ENCODE measurements at regions of chr5 and their contacts with region 1.

Region 1: GRCh38 chr5:1204693-1205242 is 3.4 kb downstream of the SLC6A19 start:
- DNase-seq: peak; percentile 71
- ATAC-seq: peak; percentile 74
- H3K4me3 ChIP-seq: peak overlapping the region in 2 of 3 experiments; percentile 24 to 58; a peak in 3 of 6 replicates
- H3K27ac ChIP-seq: no peak overlapping the region
- H3K4me1 ChIP-seq: peaks cover 31% of the 10 kb centered on the region
- H3K27me3 ChIP-seq: peaks cover 17 to 82% of the 10 kb centered on the region in 2 experiments
- CTCF ChIP-seq: peak; percentile 80
- EP300 ChIP-seq: no peak
- POLR2A ChIP-seq: no peak
- RAD21 ChIP-seq: peak; percentile 73; the same call in 1 of the 2 replicates

Region 2: DNA sequence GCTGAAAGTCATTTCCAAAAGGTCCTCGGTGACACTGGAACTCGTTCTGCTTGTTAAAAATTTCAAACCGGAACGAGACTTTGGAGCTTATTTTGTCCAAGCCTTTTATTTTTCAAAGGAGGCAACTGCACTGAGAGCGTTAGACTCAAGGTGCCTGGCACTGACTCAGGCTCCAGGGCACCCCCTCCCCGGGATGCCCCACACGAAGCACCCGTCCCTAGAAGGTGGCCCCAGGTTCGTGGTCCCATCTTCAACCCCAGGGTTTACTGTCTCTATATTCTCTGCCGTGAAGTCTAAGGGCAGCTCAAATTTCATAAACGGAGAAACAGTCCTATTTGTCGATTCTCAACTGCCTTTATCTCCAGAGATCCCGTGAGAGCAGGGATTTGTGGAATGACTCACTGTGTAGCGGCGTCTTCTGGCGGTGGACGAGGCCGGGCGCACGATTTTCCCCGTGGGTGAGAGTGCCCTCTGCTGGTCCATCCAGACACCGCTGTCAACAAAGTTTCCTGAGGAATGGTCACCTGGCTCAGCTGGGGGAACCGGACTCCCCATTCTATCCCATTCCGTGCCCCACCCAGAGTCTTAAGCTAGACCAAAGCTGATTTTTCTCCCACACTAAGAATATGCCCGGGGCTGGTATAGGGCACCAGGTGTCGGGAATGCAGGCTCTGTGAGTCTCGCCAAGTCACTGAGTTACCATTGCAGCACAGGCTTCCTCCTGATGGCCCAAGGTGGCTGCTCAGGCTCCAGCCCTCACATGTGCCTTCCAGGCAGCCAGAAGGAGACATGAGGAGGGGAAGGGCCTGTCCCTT is 30.4 kb before region 1 on chr5:
- CTCF ChIA-PET with region 1: interaction called, 24 read pairs
- POLR2A ChIA-PET with region 1: interaction called, 7 read pairs
- in situ Hi-C with region 1: no loop called
- intact Hi-C with region 1: loop called (anchors 1 kb)
- DNase-seq: peak; percentile 88
- ATAC-seq: peak; percentile 75
- H3K4me3 ChIP-seq: peak overlapping the region in 1 of 3 experiments; percentile 13; a peak in 1 of 6 replicates
- H3K27ac ChIP-seq: no peak overlapping the region
- H3K4me1 ChIP-seq: peaks cover 43% of the 10 kb centered on the region
- H3K27me3 ChIP-seq: peaks cover 0 to 15% of the 10 kb centered on the region in 2 experiments; a peak in 3 of 5 replicates
- CTCF ChIP-seq: peak; percentile 90
- EP300 ChIP-seq: no peak
- POLR2A ChIP-seq: no peak
- RAD21 ChIP-seq: peak; percentile 88

Region 3: GRCh38 chr5:1182633-1183423 is 21.9 kb before region 1 on chr5:
- CTCF ChIA-PET with region 1: no interaction called
- POLR2A ChIA-PET with region 1: interaction called, 13 read pairs
- in situ Hi-C with region 1: no loop called
- intact Hi-C with region 1: loop called (anchors 1 kb)
- DNase-seq: peak; percentile 89
- ATAC-seq: peak; percentile 69
- H3K4me3 ChIP-seq: peak overlapping the region; percentile 68 to 79 (median 74); a peak in 5 of 6 replicates
- H3K27ac ChIP-seq: peak overlapping the region; percentile 99
- H3K4me1 ChIP-seq: peaks cover 94% of the 10 kb centered on the region
- H3K27me3 ChIP-seq: no peaks in the 10 kb centered on the region; a peak in 1 of 5 replicates
- CTCF ChIP-seq: no peak
- EP300 ChIP-seq: peak in 1 of 2 experiments; percentile 54; a peak in 2 of 4 replicates
- POLR2A ChIP-seq: peak in 1 of 2 experiments; percentile 83; a peak in 2 of 4 replicates
- RAD21 ChIP-seq: 0 out of 2 replicates have a peak, but pooled peaks have one; percentile 37

Region 4: GRCh38 chr5:1225081-1225480 is 20.3 kb after region 1 on chr5 and contains the start of gene SLC6A18:
- CTCF ChIA-PET with region 1: no interaction called
- POLR2A ChIA-PET with region 1: no interaction called
- in situ Hi-C with region 1: no loop called
- intact Hi-C with region 1: loop called (anchors 2 kb)
- DNase-seq: no peak
- ATAC-seq: no peak
- H3K4me3 ChIP-seq: no peak within 1 kb of the TSS
- H3K27ac ChIP-seq: no peak within 1 kb of the TSS
- H3K4me1 ChIP-seq: no peaks in the 10 kb centered on the region
- H3K27me3 ChIP-seq: peaks cover 10 to 66% of the 10 kb centered on the region in 2 experiments; a peak in 4 of 5 replicates
- CTCF ChIP-seq: no peak
- EP300 ChIP-seq: no peak
- POLR2A ChIP-seq: no peak
- RAD21 ChIP-seq: no peak
- total RNA-seq, gene SLC6A18: not detected in 2 replicates